WTC11 (cell line): ENCODE measurements at regions of chr7 and their contacts with region 1.

Region 1: DNA sequence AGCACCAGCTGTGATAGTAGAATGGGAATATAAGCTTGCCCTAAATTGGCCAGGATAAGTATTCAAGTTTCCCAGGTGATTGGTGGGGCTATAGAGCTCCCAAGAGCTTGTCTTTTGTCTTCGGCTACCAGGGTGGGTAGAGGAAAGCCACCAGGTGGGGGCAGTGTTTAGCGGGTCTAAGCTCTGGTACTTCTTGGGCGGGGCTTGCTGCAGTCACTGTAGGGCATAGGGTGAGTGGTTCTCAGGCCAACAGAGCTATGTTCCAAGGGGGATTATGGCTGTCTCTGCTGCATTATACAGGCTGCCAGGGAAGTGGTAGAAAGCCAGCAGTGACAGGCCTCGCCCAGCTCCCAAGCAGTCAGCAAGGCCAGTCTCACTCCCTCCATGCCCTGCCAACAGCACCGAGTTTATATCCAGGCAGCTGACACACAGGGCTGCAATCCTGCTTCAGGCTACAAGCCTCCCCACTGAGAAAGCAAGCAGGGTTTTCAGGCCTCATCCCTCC is 110.7 kb downstream of the ZNF467 start:
- DNase-seq: peak; percentile 92
- ATAC-seq: peak; percentile 99
- H3K4me3 Mint-ChIP-seq: no peak overlapping the region
- H3K27ac Mint-ChIP-seq: no peak overlapping the region
- H3K4me1 Mint-ChIP-seq: peaks cover 4% of the 10 kb centered on the region; the same call in 1 of the 2 replicates
- H3K27me3 Mint-ChIP-seq: peaks cover 32% of the 10 kb centered on the region
- CTCF ChIP-seq: peak; percentile 50

Region 2: DNA sequence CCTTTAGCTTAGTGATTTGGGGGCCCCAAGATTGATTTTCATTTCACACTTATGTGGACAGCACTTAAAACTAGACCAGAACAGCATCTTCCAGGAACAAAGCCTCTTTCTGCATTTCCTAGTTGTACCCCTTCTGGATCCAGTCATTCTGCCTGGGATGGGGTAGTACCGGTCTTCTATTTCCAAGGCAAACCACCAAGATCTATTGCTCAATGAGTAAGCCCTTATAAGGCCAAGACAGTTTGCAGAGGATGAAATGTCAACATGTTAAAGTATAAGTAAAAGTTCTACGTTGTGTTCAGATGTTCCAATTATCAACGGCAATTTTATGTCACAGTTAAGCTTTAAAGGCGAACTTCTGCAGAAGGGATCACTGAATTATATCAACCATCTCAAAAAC is 58.1 kb before region 1 on chr7:
- CTCF ChIA-PET with region 1: no interaction called
- POLR2A ChIA-PET with region 1: no interaction called
- DNase-seq: no peak
- ATAC-seq: no peak
- H3K4me3 Mint-ChIP-seq: no peak overlapping the region
- H3K27ac Mint-ChIP-seq: no peak overlapping the region
- H3K4me1 Mint-ChIP-seq: no peaks in the 10 kb centered on the region
- H3K27me3 Mint-ChIP-seq: no peaks in the 10 kb centered on the region
- CTCF ChIP-seq: no peak

Region 3: GRCh38 chr7:149624419-149625339 is 38.0 kb before region 1 on chr7:
- CTCF ChIA-PET with region 1: interaction called, 55 read pairs
- POLR2A ChIA-PET with region 1: interaction called, 4 read pairs
- DNase-seq: peak; percentile 94
- ATAC-seq: peak; percentile 91
- H3K4me3 Mint-ChIP-seq: peak overlapping the region; percentile 76
- H3K27ac Mint-ChIP-seq: no peak overlapping the region
- H3K4me1 Mint-ChIP-seq: peaks cover 24% of the 10 kb centered on the region
- H3K27me3 Mint-ChIP-seq: peaks cover 14% of the 10 kb centered on the region
- CTCF ChIP-seq: peak; percentile 85

Region 4: DNA sequence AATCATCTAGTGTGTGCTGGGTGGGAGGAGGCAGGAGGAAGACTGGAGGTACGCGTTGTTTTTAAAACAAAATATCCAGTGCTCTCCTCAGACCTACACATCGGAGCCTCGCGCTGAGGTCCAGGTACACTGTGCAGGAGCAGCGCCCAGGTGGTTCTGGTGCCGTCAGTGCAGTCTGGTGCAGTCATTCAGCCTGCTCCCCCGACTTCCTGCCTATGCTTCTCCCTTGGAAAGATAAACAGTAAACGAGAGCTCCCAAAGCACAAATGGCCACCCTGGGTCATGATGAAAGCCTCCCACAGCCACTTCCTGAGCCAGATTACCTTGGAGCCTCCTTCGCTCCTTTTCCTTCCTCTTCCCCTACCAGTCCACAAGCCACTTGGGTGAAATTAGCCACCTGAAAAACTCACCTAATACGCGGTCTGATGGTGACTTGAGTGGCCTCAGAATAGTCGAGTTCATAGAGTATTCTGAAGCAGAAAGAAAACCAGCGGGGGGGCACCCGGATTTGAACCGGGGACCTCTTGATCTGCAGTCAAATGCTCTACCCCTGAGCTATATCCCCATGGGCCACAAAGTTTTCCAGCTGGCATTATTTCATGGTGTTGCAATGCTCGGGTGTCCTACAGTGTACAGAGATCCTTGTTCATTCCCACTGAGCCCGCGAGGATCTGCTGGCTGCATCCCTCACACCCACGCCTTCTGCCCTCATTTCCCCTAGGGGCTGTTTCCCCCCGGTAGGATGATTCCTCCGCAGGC is 28.2 kb after region 1 on chr7:
- CTCF ChIA-PET with region 1: interaction called, 50 read pairs
- POLR2A ChIA-PET with region 1: no interaction called
- DNase-seq: peak; percentile 96
- ATAC-seq: peak; percentile 87
- H3K4me3 Mint-ChIP-seq: peak overlapping the region; percentile 71
- H3K27ac Mint-ChIP-seq: 0 out of 2 replicates have a peak overlapping the region, but pooled peaks have one; percentile 8
- H3K4me1 Mint-ChIP-seq: peaks cover 23% of the 10 kb centered on the region
- H3K27me3 Mint-ChIP-seq: peaks cover 22% of the 10 kb centered on the region
- CTCF ChIP-seq: no peak

Region 5: GRCh38 chr7:149729983-149730801 is 67.5 kb after region 1 on chr7:
- CTCF ChIA-PET with region 1: interaction called, 18 read pairs
- POLR2A ChIA-PET with region 1: no interaction called
- DNase-seq: no peak
- ATAC-seq: peak; percentile 30
- H3K4me3 Mint-ChIP-seq: no peak overlapping the region
- H3K27ac Mint-ChIP-seq: no peak overlapping the region
- H3K4me1 Mint-ChIP-seq: no peaks in the 10 kb centered on the region
- H3K27me3 Mint-ChIP-seq: no peaks in the 10 kb centered on the region
- CTCF ChIP-seq: no peak

Region 6: DNA sequence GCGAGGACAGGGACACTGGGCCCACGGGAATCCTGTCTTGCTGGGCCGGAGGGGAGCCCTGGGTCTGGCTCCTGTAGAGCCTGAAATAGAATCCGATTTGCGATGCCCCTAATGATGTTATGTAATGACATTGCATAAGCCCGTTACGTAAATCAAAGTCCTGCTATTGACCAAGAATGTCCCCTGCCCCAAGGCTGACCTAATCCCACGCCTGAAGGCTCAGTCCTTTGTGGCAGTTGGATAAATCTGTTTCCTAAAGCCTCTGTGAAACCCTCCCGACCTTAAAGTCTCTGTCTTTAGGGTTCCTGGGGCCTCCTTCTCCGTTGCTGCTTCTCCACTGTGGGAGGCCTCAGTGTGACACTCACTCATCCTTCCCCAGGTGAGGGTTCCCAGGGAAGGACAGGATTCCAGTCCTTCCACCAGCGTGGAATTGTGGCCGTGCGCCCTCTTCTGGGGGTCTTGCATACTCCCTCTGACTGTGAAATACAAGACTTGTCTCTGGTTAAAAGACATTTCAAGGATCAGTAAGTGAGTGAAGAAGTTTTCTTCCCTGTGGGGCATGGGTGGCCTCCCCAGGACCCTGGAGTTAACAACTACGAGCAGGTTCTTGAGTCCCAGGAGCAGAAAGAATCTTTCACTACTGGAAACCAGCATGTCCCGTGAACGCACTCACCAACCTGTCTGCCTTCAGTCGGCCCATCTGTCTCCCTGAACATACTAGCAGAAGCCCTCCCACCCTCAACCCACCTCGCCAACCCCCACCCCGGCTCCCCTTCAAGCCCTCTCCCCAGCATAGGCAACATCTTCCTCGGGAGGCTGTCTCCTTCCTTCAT is 91.0 kb after region 1 on chr7:
- CTCF ChIA-PET with region 1: interaction called, 29 read pairs
- POLR2A ChIA-PET with region 1: no interaction called
- DNase-seq: peak; percentile 79
- ATAC-seq: peak; percentile 86
- H3K4me3 Mint-ChIP-seq: no peak overlapping the region
- H3K27ac Mint-ChIP-seq: no peak overlapping the region
- H3K4me1 Mint-ChIP-seq: no peaks in the 10 kb centered on the region; the same call in 1 of the 2 replicates
- H3K27me3 Mint-ChIP-seq: peaks cover 17% of the 10 kb centered on the region
- CTCF ChIP-seq: peak; percentile 63

Region 7: GRCh38 chr7:149790146-149790548 is 127.5 kb after region 1 on chr7:
- CTCF ChIA-PET with region 1: interaction called, 16 read pairs
- POLR2A ChIA-PET with region 1: no interaction called
- DNase-seq: peak; percentile 78
- ATAC-seq: peak; percentile 68
- H3K4me3 Mint-ChIP-seq: peak overlapping the region; percentile 64
- H3K27ac Mint-ChIP-seq: no peak overlapping the region
- H3K4me1 Mint-ChIP-seq: peaks cover 7% of the 10 kb centered on the region; the same call in 1 of the 2 replicates
- H3K27me3 Mint-ChIP-seq: peaks cover 47% of the 10 kb centered on the region
- CTCF ChIP-seq: peak; percentile 60